ENCODE measurements at regions of chr2 and their contacts with region 1.

Region 1: DNA sequence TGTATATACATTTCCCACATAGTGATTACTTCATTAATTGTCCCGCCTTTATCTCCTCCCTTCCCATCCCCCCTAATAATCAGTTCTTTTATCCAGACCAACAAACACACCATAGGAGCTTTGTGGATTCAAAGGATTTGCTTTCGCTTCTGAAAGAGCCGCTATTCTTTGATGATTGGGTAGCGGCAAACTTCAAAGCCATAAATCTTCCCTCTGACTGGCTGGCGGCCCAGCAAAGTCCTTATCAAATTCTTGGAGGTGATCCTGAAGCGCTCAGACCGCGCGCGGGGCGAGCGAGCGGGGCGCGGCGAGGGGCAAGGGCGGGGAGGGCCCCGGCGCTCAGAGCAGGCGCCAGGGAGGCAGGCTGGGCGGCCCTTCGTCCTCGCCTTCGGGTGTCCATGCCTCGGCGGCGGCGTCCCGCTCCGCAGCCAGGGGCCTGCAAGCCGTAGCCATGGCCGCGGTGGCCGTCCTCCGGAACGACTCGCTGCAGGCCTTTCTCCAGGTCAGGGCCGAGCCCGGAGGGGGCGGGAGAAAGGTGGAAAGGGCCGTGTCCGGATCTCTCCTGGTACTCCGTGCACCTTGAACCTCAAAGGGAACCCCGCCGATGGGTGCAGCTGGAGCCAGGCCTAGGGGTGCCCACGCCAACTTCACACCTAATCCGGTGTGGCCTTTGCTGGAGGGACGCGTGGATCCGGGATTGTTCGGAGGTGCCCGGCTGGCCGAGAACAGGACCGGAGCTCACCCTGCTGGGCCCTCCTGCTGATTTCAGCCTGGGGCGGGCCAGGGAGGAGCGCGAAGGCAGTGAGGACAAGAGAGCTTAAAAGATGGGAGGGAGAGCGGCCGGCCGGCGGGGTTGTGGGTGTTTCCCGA is at the start of gene SP5:
- DNase-seq: peak; percentile 65
- ATAC-seq: peak; percentile 73
- H3K4me3 ChIP-seq: peak within 1 kb of the TSS; percentile 74
- H3K27ac ChIP-seq: no peak within 1 kb of the TSS
- H3K4me1 ChIP-seq: no peaks in the 10 kb centered on the region; the same call in 1 of the 2 replicates
- H3K27me3 ChIP-seq: no peaks in the 10 kb centered on the region
- CTCF ChIP-seq: peak; percentile 35; the same call in 1 of the 2 replicates
- total RNA-seq, gene SP5: 0.47 and 4.8 TPM in 2 replicates

Region 2: GRCh38 chr2:169782513-169782912 is 932.8 kb before region 1 on chr2:
- CTCF ChIA-PET with region 1: no interaction called
- POLR2A ChIA-PET with region 1: interaction called, 11 read pairs
- intact Hi-C with region 1: no loop called
- DNase-seq: no peak
- ATAC-seq: no peak
- H3K4me3 ChIP-seq: no peak overlapping the region
- H3K27ac ChIP-seq: no peak overlapping the region
- H3K4me1 ChIP-seq: no peaks in the 10 kb centered on the region
- H3K27me3 ChIP-seq: no peaks in the 10 kb centered on the region
- CTCF ChIP-seq: no peak

Region 3: GRCh38 chr2:170409164-170409535 is 306.1 kb before region 1 on chr2:
- CTCF ChIA-PET with region 1: no interaction called
- POLR2A ChIA-PET with region 1: no interaction called
- intact Hi-C with region 1: loop called (anchors 10 kb)
- DNase-seq: peak; percentile 80
- ATAC-seq: peak; percentile 75
- H3K4me3 ChIP-seq: peak overlapping the region; percentile 56; the same call in 1 of the 2 replicates
- H3K27ac ChIP-seq: no peak overlapping the region
- H3K4me1 ChIP-seq: peaks cover 18% of the 10 kb centered on the region
- H3K27me3 ChIP-seq: no peaks in the 10 kb centered on the region
- CTCF ChIP-seq: peak; percentile 93

Region 4: DNA sequence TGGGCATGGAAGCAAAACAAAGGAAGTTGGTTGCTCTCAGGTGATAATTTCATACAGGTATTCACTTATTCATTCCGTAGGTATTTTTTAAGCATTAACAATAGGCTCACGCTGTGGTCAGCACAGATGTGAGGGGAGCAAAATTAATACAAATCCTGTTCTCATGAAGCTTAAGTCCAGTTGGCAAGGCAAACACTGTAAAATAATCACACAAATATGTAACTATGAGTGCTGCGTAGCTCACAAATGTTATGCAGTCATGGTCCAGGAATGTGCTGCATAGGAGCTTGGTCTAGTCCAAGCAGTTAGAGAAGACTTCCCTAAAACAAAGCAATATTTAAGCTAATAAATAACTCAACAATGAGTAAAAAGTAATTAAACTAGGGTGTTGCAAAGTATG is 23.8 kb after region 1 on chr2:
- CTCF ChIA-PET with region 1: no interaction called
- POLR2A ChIA-PET with region 1: interaction called, 3 read pairs
- intact Hi-C with region 1: loop called (anchors 2 kb)
- DNase-seq: peak; percentile 98
- ATAC-seq: peak; percentile 94
- H3K4me3 ChIP-seq: peak overlapping the region; percentile 50
- H3K27ac ChIP-seq: peak overlapping the region; percentile 87
- H3K4me1 ChIP-seq: peaks cover 28% of the 10 kb centered on the region
- H3K27me3 ChIP-seq: no peaks in the 10 kb centered on the region
- CTCF ChIP-seq: no peak

Region 5: GRCh38 chr2:170815746-170816503 is 100.6 kb after region 1 on chr2:
- CTCF ChIA-PET with region 1: no interaction called
- POLR2A ChIA-PET with region 1: no interaction called
- intact Hi-C with region 1: no loop called
- DNase-seq: peak; percentile 82
- ATAC-seq: peak; percentile 47
- H3K4me3 ChIP-seq: peak overlapping the region; percentile 97
- H3K27ac ChIP-seq: no peak overlapping the region
- H3K4me1 ChIP-seq: peaks cover 13% of the 10 kb centered on the region; the same call in 1 of the 2 replicates
- H3K27me3 ChIP-seq: no peaks in the 10 kb centered on the region
- CTCF ChIP-seq: peak; percentile 89